SK-N-SH (cell line): ENCODE measurements at regions of chr5 and their contacts with region 1.

Region 1: DNA sequence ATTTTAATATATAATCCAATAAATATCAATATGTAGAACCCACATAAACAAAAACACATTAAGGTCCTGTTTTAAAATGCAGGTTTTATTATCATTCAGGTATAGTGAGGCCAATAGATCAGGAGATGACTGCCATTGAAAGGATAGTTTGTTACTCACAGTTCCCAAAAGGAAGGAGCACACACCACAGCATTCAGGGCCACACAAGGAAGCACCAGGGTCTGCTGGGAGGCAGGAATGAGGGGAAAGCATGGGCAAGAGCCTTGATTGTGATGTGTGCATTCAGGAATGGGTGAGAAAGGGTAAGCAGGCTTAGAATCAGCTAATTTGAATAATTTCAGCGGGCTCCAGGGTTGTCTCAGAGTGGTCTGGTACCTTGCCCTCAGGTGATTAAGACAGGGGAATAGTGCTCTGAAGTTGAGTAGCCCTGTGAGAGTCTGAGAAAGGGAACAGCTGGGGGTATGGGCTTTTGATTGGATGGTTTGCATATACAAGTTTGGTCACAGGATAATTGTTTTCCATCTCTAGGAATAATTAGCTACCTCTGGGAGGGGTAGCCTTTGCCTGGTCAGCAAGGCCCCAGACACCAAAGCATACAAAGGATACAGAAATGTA is 19.8 kb upstream of the OTULIN start:
- DNase-seq: no peak
- H3K4me3 ChIP-seq: no peak overlapping the region
- H3K27ac ChIP-seq: no peak overlapping the region
- H3K4me1 ChIP-seq: no peaks in the 10 kb centered on the region
- H3K27me3 ChIP-seq: peaks cover 6% of the 10 kb centered on the region; the same call in 1 of the 2 replicates
- CTCF ChIP-seq: no peak
- EP300 ChIP-seq: no peak
- RAD21 ChIP-seq: no peak

Region 2: GRCh38 chr5:14326035-14326903 is 318.5 kb before region 1 on chr5:
- CTCF ChIA-PET with region 1: interaction called, 12 read pairs
- POLR2A ChIA-PET with region 1: no interaction called
- DNase-seq: peak; percentile 42
- H3K4me3 ChIP-seq: no peak overlapping the region
- H3K27ac ChIP-seq: peak overlapping the region in 1 of 2 experiments; percentile 67; a peak in 2 of 4 replicates
- H3K4me1 ChIP-seq: peaks cover 0 to 11% of the 10 kb centered on the region in 2 experiments; a peak in 1 of 4 replicates
- H3K27me3 ChIP-seq: no peaks in the 10 kb centered on the region
- CTCF ChIP-seq: peak; percentile 47
- EP300 ChIP-seq: no peak
- RAD21 ChIP-seq: peak; percentile 50; the same call in 1 of the 2 replicates

Region 3: DNA sequence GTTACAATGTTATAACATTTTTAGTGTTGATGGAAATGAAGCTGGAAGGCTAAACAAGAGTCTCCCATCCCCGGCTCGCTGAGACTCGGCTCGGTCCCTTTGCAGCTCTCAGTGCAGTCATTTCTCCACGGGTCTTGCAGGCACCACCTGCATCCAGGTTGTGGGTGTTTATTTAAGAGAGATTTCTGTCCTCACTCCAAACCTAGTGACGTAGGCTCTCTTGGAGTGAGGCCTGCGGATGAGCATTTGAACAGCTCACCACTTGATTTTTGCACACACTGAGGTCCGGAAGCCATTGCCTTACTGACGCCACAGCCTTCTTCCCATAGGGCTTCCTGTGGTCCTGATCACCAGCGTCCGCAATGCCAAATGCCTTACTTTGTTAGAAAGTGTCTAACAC is 260.8 kb before region 1 on chr5:
- CTCF ChIA-PET with region 1: interaction called, 47 read pairs
- POLR2A ChIA-PET with region 1: no interaction called
- DNase-seq: no peak
- H3K4me3 ChIP-seq: no peak overlapping the region
- H3K27ac ChIP-seq: no peak overlapping the region
- H3K4me1 ChIP-seq: peaks cover 0 to 13% of the 10 kb centered on the region in 2 experiments; a peak in 2 of 4 replicates
- H3K27me3 ChIP-seq: no peaks in the 10 kb centered on the region
- CTCF ChIP-seq: no peak
- EP300 ChIP-seq: no peak
- RAD21 ChIP-seq: no peak

Region 4: GRCh38 chr5:14417276-14417730 is 227.4 kb before region 1 on chr5:
- CTCF ChIA-PET with region 1: interaction called, 11 read pairs
- POLR2A ChIA-PET with region 1: no interaction called
- DNase-seq: peak; percentile 88
- H3K4me3 ChIP-seq: no peak overlapping the region
- H3K27ac ChIP-seq: peak overlapping the region; percentile 98 to 100
- H3K4me1 ChIP-seq: peaks cover 63 to 81% of the 10 kb centered on the region in 2 experiments
- H3K27me3 ChIP-seq: no peaks in the 10 kb centered on the region
- CTCF ChIP-seq: peak; percentile 41
- EP300 ChIP-seq: peak; percentile 10 to 99; a peak in 2 of 4 replicates
- RAD21 ChIP-seq: peak; percentile 70

Region 5: GRCh38 chr5:14505310-14506032 is 139.3 kb before region 1 on chr5:
- CTCF ChIA-PET with region 1: interaction called, 10 read pairs
- POLR2A ChIA-PET with region 1: no interaction called
- DNase-seq: peak; percentile 64
- H3K4me3 ChIP-seq: no peak overlapping the region
- H3K27ac ChIP-seq: no peak overlapping the region; a peak in 1 of 4 replicates
- H3K4me1 ChIP-seq: no peaks in the 10 kb centered on the region
- H3K27me3 ChIP-seq: no peaks in the 10 kb centered on the region
- CTCF ChIP-seq: peak; percentile 41
- EP300 ChIP-seq: no peak
- RAD21 ChIP-seq: peak; percentile 36; the same call in 1 of the 2 replicates

Region 6: GRCh38 chr5:14660833-14661232 is 16.1 kb after region 1 on chr5:
- CTCF ChIA-PET with region 1: interaction called, 18 read pairs
- POLR2A ChIA-PET with region 1: no interaction called
- DNase-seq: no peak
- H3K4me3 ChIP-seq: no peak overlapping the region
- H3K27ac ChIP-seq: no peak overlapping the region
- H3K4me1 ChIP-seq: peaks cover 10 to 13% of the 10 kb centered on the region in 2 experiments; a peak in 3 of 4 replicates
- H3K27me3 ChIP-seq: no peaks in the 10 kb centered on the region
- CTCF ChIP-seq: no peak
- EP300 ChIP-seq: no peak
- RAD21 ChIP-seq: no peak

Region 7: GRCh38 chr5:14700478-14701436 is 56.0 kb after region 1 on chr5:
- CTCF ChIA-PET with region 1: no interaction called
- POLR2A ChIA-PET with region 1: no interaction called
- DNase-seq: no peak
- H3K4me3 ChIP-seq: no peak overlapping the region
- H3K27ac ChIP-seq: no peak overlapping the region; a peak in 1 of 4 replicates
- H3K4me1 ChIP-seq: peaks cover 0 to under 1% of the 10 kb centered on the region in 2 experiments; a peak in 1 of 4 replicates
- H3K27me3 ChIP-seq: no peaks in the 10 kb centered on the region
- CTCF ChIP-seq: no peak
- EP300 ChIP-seq: no peak
- RAD21 ChIP-seq: no peak